Activated naive CD4-positive, alpha-beta T cell treated with anti-CD3 and anti-CD28 coated beads, Interleukin-2, amount 10 ng/mL, durations not matched to agents 7 days and 5 days (primary cell): ENCODE measurements at regions of chr12 and their contacts with region 1.

Region 1: GRCh38 chr12:94101738-94102660 is 46.4 kb upstream of the PLXNC1 start:
- DNase-seq: peak; percentile 92
- H3K4me3 Mint-ChIP-seq: peak overlapping the region; percentile 79
- H3K27ac Mint-ChIP-seq: peak overlapping the region; percentile 89
- H3K4me1 Mint-ChIP-seq: peaks cover 52% of the 10 kb centered on the region
- H3K27me3 Mint-ChIP-seq: peaks cover 9% of the 10 kb centered on the region

Region 2: GRCh38 chr12:93419388-93420034 is 682.5 kb before region 1 on chr12:
- CTCF ChIA-PET with region 1: interaction called, 23 read pairs
- DNase-seq: no peak
- H3K4me3 Mint-ChIP-seq: no peak overlapping the region
- H3K27ac Mint-ChIP-seq: no peak overlapping the region
- H3K4me1 Mint-ChIP-seq: peaks cover 69% of the 10 kb centered on the region
- H3K27me3 Mint-ChIP-seq: no peaks in the 10 kb centered on the region

Region 3: DNA sequence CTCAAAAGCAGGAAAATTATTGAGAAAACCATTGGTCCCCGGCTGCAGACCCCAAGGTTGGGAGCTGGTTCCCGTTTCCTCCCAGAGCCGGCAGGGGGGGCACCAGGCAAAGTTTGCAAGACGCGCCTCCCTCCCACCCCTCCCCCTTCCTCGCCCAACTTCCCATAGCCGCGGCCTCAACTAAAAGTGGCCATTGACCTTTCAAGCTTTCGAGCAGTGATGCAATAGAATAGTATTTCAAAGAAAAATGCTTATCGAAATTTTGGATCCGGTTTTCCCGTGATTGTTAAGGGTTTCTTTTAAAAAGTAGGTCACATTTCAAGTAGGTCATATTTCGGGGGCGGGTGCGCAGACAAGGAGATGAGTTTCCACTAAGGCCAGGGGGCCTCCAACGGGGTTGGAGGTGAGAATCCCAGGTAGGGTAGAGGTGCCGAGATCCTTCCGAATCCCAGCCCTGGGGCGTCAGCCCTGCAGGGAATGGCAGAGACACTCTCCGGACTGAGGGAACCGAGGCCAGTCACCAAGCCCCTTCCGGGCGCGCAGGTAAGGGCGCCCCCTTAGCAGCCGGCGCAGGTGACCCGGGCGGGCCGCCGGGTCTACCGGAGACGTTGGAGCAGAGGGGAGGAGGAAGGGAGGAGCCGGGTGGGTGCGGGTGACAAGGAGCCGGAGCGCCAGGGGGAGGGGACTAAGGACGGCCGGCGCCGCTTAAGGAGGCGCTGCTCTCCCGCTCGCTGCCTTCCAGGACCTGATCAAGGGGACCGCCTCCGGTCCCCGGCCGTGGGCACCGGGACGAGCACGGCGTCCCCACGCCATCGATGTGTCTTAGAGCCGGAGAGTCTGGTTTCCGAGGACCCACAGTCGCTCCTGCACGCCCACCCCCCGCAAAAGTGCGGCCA is 532.1 kb before region 1 on chr12:
- CTCF ChIA-PET with region 1: interaction called, 114 read pairs
- DNase-seq: peak; percentile 89
- H3K4me3 Mint-ChIP-seq: peak overlapping the region; percentile 81
- H3K27ac Mint-ChIP-seq: peak overlapping the region; percentile 93
- H3K4me1 Mint-ChIP-seq: peaks cover 39% of the 10 kb centered on the region
- H3K27me3 Mint-ChIP-seq: peaks cover 18% of the 10 kb centered on the region

Region 4: DNA sequence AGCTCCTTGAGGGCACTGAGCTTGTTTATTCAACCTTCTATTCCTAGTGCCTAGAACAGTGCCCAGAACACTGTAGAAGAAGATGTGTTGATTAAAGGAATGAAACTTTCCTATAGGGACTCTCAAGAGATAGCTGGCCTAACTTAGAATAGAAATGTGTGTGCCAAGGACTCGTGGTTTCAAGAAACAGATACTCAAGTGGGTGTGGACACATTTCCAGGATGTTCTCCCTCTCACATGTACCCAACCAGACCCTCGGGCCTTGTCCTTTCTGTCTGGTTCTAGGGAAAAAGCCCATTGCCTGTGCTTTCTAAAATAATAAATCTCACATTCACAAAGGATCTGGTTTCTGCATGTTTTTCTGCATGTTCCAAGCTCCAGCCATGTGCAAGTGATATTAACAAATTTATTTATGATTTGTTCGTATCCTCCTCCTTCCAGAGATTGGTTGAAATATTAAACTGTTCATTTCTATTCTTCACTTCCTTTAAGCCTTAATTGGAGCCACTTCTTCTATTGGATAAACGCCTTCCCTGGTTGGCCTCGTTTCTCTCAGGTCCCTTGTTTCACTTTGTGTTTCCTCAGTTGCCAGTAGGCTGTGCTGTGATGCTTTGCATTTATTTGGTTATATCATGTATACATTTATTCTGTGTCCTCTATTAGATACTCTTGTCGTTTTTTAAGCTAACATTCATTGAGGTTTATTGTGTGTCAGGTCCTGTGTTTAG is 335.0 kb before region 1 on chr12:
- CTCF ChIA-PET with region 1: interaction called, 200 read pairs
- DNase-seq: peak; percentile 74
- H3K4me3 Mint-ChIP-seq: no peak overlapping the region
- H3K27ac Mint-ChIP-seq: peak overlapping the region; percentile 84
- H3K4me1 Mint-ChIP-seq: peaks cover 69% of the 10 kb centered on the region
- H3K27me3 Mint-ChIP-seq: peaks cover 8% of the 10 kb centered on the region

Region 5: GRCh38 chr12:93979189-93979588 is 122.8 kb before region 1 on chr12:
- CTCF ChIA-PET with region 1: interaction called, 135 read pairs
- DNase-seq: peak; percentile 62
- H3K4me3 Mint-ChIP-seq: no peak overlapping the region
- H3K27ac Mint-ChIP-seq: no peak overlapping the region
- H3K4me1 Mint-ChIP-seq: peaks cover 47% of the 10 kb centered on the region
- H3K27me3 Mint-ChIP-seq: peaks cover 19% of the 10 kb centered on the region

Region 6: DNA sequence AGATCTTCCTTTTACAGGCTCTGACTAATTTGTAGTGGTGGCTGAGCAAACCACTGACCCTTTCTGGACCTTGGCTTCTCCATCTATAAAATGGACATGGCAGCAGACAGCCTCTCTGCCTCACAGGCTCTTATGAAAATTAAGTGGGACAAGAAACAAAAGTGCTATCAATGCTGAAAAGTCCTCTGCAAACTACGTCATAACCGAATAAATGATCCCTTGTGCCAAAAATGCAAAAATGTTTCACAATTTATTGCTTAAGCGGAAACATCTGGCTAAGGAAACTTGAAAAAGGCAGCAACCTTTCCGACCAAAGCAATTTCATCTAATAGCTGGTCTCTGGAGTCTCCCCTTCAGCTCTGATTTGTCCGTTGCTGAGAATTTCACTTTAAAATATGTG is 62.1 kb before region 1 on chr12:
- CTCF ChIA-PET with region 1: no interaction called
- DNase-seq: no peak
- H3K4me3 Mint-ChIP-seq: no peak overlapping the region
- H3K27ac Mint-ChIP-seq: no peak overlapping the region
- H3K4me1 Mint-ChIP-seq: no peaks in the 10 kb centered on the region
- H3K27me3 Mint-ChIP-seq: no peaks in the 10 kb centered on the region

Region 7: GRCh38 chr12:94112132-94112531 is 10.1 kb after region 1 on chr12:
- CTCF ChIA-PET with region 1: interaction called, 22 read pairs
- DNase-seq: no peak
- H3K4me3 Mint-ChIP-seq: no peak overlapping the region
- H3K27ac Mint-ChIP-seq: no peak overlapping the region
- H3K4me1 Mint-ChIP-seq: peaks cover 23% of the 10 kb centered on the region
- H3K27me3 Mint-ChIP-seq: peaks cover 24% of the 10 kb centered on the region

Region 8: DNA sequence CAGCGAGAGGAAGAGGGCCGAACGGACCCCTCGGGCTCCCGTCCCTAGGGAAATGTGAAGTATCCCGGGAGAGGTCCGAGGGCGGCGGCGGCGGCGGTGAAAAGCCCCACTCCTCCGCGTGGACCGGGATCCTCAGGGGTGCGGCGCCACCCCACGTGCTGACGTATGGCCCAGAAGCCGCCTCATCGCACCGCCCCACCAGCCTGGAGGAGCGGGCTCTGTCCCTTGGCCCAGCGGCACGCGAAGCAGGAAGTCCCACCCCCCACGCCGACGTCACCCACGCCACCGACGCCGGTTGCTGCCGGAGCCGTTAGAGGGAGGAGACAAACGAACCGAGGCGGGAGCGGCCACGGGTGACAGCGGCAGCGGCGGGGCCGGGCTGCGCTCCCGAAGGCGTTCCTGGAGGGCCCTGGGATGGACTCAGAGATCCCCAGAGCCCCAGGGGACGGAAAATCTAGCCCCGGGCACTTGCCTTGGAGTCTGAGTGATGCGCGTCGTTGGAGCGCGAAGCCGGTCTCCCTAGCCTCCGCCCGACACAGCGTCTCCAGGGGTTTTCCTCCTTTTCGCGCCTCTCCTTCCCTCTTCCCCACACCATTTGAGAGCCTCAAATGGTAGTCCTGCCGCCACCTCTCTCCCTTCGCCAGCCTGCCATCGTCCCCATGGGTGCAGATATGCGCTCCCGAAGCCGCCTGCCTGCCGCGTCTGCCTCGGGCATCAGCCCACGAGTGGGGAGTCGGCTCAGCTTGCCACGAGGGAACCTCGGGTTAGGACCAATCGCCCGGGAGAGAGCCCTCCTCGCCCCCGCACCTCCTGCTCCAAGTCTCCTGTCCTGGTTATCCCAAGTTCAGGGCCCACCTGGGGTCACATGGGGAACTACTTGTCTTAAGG is 358.0 kb after region 1 on chr12 and contains the start of gene CEP83:
- CTCF ChIA-PET with region 1: no interaction called
- DNase-seq: peak; percentile 99
- H3K4me3 Mint-ChIP-seq: peak within 1 kb of the TSS; percentile 94
- H3K27ac Mint-ChIP-seq: peak within 1 kb of the TSS; percentile 93
- H3K4me1 Mint-ChIP-seq: peaks cover 34% of the 10 kb centered on the region
- H3K27me3 Mint-ChIP-seq: peaks cover 10% of the 10 kb centered on the region